ENCODE measurements at regions of chr5 and their contacts with region 1.

Region 1: GRCh38 chr5:55923177-55923771 is 71.5 kb downstream of the IL6ST start:
- DNase-seq: no peak
- H3K4me3 ChIP-seq: no peak overlapping the region
- H3K27ac ChIP-seq: no peak overlapping the region
- H3K4me1 ChIP-seq: no peaks in the 10 kb centered on the region
- H3K27me3 ChIP-seq: no peaks in the 10 kb centered on the region
- CTCF ChIP-seq: no peak

Region 2: DNA sequence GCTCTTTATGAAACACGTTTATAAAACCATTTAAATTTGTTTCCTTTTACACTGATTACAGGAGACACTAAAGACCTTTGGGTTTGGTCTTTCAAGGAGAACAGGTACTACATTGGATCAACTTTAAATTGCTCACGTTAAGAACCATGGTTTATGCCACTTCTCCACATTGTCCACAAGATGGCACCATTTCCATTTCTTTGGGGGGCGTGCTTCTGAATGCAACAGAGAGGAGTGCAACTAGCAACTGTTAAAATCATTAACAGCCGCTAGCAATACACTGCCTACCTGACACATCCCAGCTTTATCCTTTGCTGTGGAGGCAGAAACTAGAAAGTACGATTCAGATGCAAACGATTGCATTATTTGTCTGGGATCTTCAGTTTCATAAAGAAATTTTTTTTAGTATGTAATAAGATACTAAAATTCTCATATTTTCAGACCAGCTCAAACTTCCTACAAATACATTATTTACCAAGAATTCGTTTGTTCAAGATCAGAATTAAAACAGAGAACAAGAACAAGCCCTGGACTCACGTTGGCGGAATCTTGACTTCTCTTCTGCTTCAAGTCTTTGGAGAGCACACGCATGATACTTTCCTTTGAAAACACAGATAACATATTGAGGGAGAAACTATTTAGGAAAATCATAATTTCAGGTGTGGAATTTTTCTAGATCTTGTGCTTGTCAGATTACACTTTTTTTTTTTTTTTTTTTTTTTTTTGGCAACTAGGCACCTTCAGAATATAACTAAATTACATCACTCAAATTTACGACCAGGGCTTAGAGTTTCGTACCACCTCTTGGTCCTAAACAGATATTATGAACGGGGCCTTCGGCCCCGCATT is 751.0 kb before region 1 on chr5:
- CTCF ChIA-PET with region 1: no interaction called
- dilution Hi-C with region 1: no loop called
- in situ Hi-C with region 1: no loop called
- intact Hi-C with region 1: loop called (anchors 5 kb)
- DNase-seq: peak; percentile 81
- H3K4me3 ChIP-seq: peak overlapping the region; percentile 55 to 81 (median 62)
- H3K27ac ChIP-seq: peak overlapping the region; percentile 35
- H3K4me1 ChIP-seq: peaks cover 31% of the 10 kb centered on the region
- H3K27me3 ChIP-seq: no peaks in the 10 kb centered on the region
- CTCF ChIP-seq: peak; percentile 81

Region 3: DNA sequence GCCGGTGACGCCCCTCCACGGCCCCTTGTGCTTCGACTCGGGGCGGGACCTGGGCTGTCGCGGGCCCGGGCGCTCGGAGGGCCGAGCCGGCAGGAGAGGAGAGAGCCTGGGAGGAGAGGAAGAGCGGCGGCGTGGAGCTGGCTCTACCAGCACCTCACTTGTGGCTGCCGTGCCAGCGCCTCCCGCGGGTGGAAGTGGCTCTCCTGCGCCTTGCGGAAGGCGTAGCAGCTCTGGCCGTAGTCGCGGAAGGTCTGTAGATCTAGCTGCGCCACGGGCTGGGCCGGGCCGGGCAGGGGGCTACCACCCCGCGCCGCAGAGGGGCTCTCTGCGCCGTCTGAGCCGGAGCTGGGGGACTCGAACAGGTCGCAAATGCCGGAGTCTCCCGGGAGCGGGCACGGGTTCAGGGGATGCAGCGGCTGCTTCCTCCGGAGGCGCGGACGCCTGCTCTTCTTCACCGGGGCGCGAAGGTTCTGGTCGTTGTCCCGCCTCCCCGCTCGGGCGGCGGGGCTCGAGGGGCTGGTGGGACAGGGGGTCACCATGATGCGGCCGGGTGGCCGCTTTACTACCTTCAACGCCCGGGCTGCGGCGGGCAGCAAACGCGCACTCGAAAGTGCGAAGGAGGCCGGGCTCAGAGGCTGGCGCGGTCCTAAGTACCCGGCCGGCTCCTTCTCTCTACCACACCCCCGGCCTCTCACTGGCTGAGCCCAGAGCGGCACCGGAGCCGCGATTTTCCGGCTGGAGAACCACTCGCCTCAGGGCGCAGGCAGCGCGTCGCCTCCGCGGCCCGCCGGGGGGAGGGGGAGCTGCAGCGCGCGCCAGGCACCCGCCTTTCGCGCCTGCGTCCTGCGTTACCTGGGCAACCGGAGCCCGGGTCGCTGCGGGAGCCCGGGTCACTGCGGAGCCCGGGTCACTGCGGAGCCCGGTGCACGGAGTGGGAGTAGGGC is 690.0 kb before region 1 on chr5 and contains the start of gene CCNO:
- CTCF ChIA-PET with region 1: no interaction called
- dilution Hi-C with region 1: no loop called
- in situ Hi-C with region 1: no loop called
- intact Hi-C with region 1: loop called (anchors 10 kb)
- DNase-seq: peak; percentile 90
- H3K4me3 ChIP-seq: peak within 1 kb of the TSS; percentile 63 to 79 (median 74)
- H3K27ac ChIP-seq: peak within 1 kb of the TSS; percentile 44
- H3K4me1 ChIP-seq: peaks cover 14% of the 10 kb centered on the region
- H3K27me3 ChIP-seq: no peaks in the 10 kb centered on the region
- CTCF ChIP-seq: peak in 1 of 2 donors; percentile 31
- total RNA-seq, gene CCNO: 2.7 to 8.8 TPM

Region 4: DNA sequence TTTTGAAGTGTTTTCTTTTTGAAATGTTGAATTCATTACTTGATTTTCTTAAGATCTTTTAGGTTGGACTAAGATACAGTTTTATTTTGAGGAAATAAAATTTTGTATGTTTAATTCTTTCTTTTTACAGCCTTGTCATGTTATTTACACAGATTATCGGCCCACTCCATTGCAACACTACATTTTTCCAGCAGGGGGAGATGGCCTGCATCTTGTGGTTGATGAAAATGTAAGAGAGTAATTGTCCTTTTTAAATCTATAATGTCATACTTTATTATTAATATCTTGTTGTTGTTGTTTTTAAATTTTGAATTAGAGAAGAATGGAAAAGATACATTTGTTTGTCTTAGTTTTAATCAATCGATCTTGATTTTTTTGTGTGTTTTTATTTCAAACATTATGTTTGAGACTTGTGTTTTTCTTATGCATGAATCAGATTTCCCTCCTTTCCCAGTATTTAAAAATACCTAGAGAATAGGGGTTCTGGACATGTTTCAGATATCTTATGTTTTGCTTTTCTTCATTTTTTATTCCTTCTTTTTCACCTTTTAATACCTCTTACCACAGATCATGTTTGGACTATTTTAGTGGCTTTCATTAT is 578.8 kb before region 1 on chr5:
- CTCF ChIA-PET with region 1: no interaction called
- dilution Hi-C with region 1: no loop called
- in situ Hi-C with region 1: no loop called
- intact Hi-C with region 1: loop called (anchors 10 kb)
- DNase-seq: peak; percentile 29
- H3K4me3 ChIP-seq: no peak overlapping the region
- H3K27ac ChIP-seq: no peak overlapping the region
- H3K4me1 ChIP-seq: no peaks in the 10 kb centered on the region
- H3K27me3 ChIP-seq: no peaks in the 10 kb centered on the region
- CTCF ChIP-seq: peak; percentile 87

Region 5: GRCh38 chr5:55407059-55407684 is 516.1 kb before region 1 on chr5:
- CTCF ChIA-PET with region 1: no interaction called
- dilution Hi-C with region 1: no loop called
- in situ Hi-C with region 1: loop called in 1 of 2 experiments (anchors 25 kb)
- intact Hi-C with region 1: loop called (anchors 10 kb)
- DNase-seq: peak; percentile 23
- H3K4me3 ChIP-seq: no peak overlapping the region
- H3K27ac ChIP-seq: no peak overlapping the region
- H3K4me1 ChIP-seq: no peaks in the 10 kb centered on the region
- H3K27me3 ChIP-seq: no peaks in the 10 kb centered on the region
- CTCF ChIP-seq: peak; percentile 68 to 76

Region 6: DNA sequence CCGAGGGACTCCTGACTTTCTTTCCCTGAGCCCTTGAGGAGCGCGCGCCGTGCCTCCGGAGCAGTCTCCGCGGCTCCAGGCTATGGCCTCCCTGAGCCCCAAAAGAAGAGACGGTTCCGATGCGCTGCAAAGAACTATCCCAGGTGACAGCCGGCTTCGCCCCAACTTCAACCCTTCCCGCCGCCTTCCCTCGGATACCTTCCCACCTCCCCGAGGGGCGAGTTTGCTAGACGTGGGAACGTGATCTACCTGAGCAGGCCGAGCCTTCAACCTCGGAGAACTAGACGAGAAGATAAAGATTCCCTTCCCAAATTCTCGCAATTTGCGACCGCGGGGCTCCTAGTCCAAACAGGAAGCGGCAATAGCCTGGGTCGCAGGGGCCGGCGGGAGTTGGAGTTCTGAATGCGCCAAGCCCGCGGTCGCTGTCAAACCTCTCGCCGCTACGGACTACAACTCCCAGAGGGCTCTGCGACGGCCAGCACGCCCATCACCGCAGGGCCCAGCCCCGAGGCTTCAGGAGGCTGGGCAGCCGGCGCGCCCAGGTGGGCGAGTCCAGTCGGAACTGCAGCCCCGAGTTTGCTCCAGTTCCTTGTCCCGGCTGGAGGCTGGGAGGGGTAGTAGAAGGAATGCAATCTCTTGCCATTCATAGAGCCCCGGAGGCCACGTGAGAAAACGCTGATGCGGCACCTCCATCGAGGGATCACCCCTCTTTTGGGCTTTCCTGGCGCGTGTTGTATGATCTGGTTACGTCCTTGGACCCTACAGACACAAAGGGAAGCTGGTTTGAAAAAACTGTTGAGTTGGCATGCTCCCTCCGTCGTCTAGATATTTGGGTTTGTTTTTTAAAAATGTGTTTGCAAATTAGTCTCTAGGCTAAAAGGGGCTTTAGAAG is 211.1 kb before region 1 on chr5 and contains the start of gene SLC38A9:
- CTCF ChIA-PET with region 1: no interaction called
- dilution Hi-C with region 1: no loop called
- in situ Hi-C with region 1: loop called in 1 of 2 experiments (anchors 25 kb)
- intact Hi-C with region 1: loop called (anchors 5 kb)
- DNase-seq: peak; percentile 91
- H3K4me3 ChIP-seq: peak within 1 kb of the TSS; percentile 66 to 99 (median 98)
- H3K27ac ChIP-seq: peak within 1 kb of the TSS; percentile 75
- H3K4me1 ChIP-seq: peaks cover 18% of the 10 kb centered on the region
- H3K27me3 ChIP-seq: no peaks in the 10 kb centered on the region
- CTCF ChIP-seq: no peak
- total RNA-seq, gene SLC38A9: 23.0 to 62.5 TPM

Region 7: DNA sequence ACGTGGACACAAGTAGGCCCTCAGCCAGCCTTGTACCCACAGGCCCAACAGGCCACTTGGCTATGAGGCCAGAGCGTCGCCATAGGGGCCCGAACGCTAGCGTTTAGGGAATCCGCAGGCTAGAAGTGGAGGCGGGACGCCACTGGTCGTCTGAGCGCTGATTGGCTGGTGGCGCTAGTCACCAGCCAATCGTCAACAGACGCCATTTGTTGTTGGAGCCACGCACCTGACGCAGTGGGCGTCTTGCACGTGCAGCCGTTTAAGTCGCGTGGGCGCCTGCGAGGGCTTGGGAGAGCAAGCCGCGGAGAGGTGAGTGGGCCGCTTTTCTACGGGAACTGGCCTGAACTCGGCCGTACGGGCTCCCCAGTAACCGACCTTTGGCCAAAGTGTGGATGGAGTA is 185.5 kb before region 1 on chr5 and contains the start of gene DDX4:
- CTCF ChIA-PET with region 1: no interaction called
- dilution Hi-C with region 1: loop called (anchors 10 kb)
- in situ Hi-C with region 1: loop called in 1 of 2 experiments (anchors 25 kb)
- intact Hi-C with region 1: no loop called
- DNase-seq: no peak
- H3K4me3 ChIP-seq: no peak within 1 kb of the TSS
- H3K27ac ChIP-seq: no peak within 1 kb of the TSS
- H3K4me1 ChIP-seq: no peaks in the 10 kb centered on the region
- H3K27me3 ChIP-seq: no peaks in the 10 kb centered on the region
- CTCF ChIP-seq: no peak
- total RNA-seq, gene DDX4: not detected

Region 8: GRCh38 chr5:56148453-56148971 is 225.2 kb after region 1 on chr5:
- CTCF ChIA-PET with region 1: no interaction called
- dilution Hi-C with region 1: no loop called
- in situ Hi-C with region 1: no loop called
- intact Hi-C with region 1: no loop called
- DNase-seq: no peak
- H3K4me3 ChIP-seq: no peak overlapping the region
- H3K27ac ChIP-seq: no peak overlapping the region
- H3K4me1 ChIP-seq: peaks cover 12% of the 10 kb centered on the region
- H3K27me3 ChIP-seq: no peaks in the 10 kb centered on the region
- CTCF ChIP-seq: no peak